ENCODE measurements at regions of chr5 and their contacts with region 1.

Region 1: DNA sequence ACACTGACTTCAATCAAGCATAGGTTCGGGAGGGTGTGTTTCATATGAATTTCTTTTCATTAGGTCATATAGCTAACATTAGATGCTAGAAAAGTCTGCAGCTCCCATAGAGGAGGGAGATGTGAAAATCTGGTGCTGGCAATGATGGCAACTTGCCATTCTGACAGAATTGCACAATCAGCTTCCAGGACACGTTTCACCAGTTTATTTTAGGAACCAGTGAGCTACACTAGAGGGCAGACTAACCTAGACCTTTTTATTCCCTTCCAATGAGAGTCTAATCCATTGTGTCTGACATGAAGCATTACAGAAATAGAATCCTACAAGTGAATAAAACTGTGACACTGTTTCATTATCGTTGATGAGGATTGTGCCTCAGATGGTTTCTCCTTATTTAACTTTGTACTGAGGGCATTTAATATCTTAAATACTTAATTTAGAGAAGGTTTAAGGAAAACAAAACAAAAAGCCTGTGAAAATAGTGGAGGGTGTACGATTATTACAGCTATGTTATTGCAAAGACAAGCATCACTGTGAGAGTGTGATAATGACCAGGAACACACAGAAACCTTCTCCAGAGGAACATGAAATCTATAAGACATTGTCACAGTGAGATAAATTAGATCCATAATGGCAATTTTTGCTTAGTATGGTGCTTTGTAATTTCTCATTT is 363.3 kb upstream of the RPS23 start:
- DNase-seq: peak; percentile 72 to 79
- ATAC-seq: peak; percentile 92
- H3K4me3 ChIP-seq: no peak overlapping the region
- H3K27ac ChIP-seq: peak overlapping the region in 1 of 2 donors; percentile 51
- H3K4me1 ChIP-seq: peaks cover 0 to 10% of the 10 kb centered on the region in 2 donors
- H3K27me3 ChIP-seq: no peaks in the 10 kb centered on the region

Region 2: DNA sequence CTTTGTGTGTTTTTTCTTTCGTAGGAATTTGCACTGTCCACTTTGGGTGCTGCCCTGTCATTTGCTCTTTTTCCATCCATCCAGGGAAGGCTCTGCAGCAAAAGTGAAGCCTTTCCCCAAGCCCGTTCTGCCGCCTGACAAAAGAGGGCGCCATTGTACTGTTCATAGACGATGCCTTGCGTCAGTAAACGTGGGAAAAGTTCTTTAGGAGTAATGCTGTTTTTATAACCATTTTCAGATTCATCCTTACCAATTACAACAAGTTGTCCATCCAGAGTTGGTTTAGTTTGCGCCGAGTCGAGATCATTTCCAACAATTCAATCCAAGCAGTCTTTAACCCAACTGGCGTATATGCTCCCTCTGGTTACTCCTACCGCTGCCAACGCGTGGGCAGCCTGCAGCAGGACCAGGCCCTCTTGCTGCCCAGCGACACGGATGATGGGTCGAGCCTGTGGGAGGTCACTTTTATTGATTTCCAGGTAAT is 329.1 kb before region 1 on chr5:
- intact Hi-C with region 1: loop called in 1 of 2 experiments (anchors 2 kb)
- DNase-seq: peak; percentile 75 to 87
- ATAC-seq: peak; percentile 88
- H3K4me3 ChIP-seq: peak overlapping the region; percentile 5 to 32
- H3K27ac ChIP-seq: peak overlapping the region; percentile 33 to 77
- H3K4me1 ChIP-seq: peaks cover under 1 to 4% of the 10 kb centered on the region in 2 donors
- H3K27me3 ChIP-seq: no peaks in the 10 kb centered on the region

Region 3: GRCh38 chr5:82351754-82352145 is 289.7 kb before region 1 on chr5:
- intact Hi-C with region 1: loop called in 1 of 2 experiments (anchors 5 kb)
- DNase-seq: no peak
- ATAC-seq: peak; percentile 83
- H3K4me3 ChIP-seq: no peak overlapping the region
- H3K27ac ChIP-seq: peak overlapping the region in 1 of 2 donors; percentile 64
- H3K4me1 ChIP-seq: peaks cover 2 to 6% of the 10 kb centered on the region in 2 donors
- H3K27me3 ChIP-seq: no peaks in the 10 kb centered on the region

Region 4: GRCh38 chr5:82428665-82429064 is 212.8 kb before region 1 on chr5:
- intact Hi-C with region 1: no loop called
- DNase-seq: no peak
- ATAC-seq: no peak
- H3K4me3 ChIP-seq: no peak overlapping the region
- H3K27ac ChIP-seq: no peak overlapping the region
- H3K4me1 ChIP-seq: no peaks in the 10 kb centered on the region
- H3K27me3 ChIP-seq: no peaks in the 10 kb centered on the region

Region 5: GRCh38 chr5:82793808-82794419 is 152.4 kb after region 1 on chr5:
- intact Hi-C with region 1: loop called in 1 of 2 experiments (anchors 10 kb)
- DNase-seq: no peak
- ATAC-seq: no peak
- H3K4me3 ChIP-seq: no peak overlapping the region
- H3K27ac ChIP-seq: no peak overlapping the region
- H3K4me1 ChIP-seq: no peaks in the 10 kb centered on the region
- H3K27me3 ChIP-seq: no peaks in the 10 kb centered on the region

Region 6: GRCh38 chr5:83076742-83077661 is 435.5 kb after region 1 on chr5 and contains the starts of genes TMEM167A and XRCC4:
- intact Hi-C with region 1: loop called in 1 of 2 experiments (anchors 5 kb)
- DNase-seq: peak; percentile 97 to 98
- ATAC-seq: peak; percentile 100
- H3K4me3 ChIP-seq: peak within 1 kb of the TSS; percentile 94 to 97
- H3K27ac ChIP-seq: peak within 1 kb of the TSS in 1 of 2 donors; percentile 90
- H3K4me1 ChIP-seq: peaks cover 4 to 5% of the 10 kb centered on the region in 2 donors
- H3K27me3 ChIP-seq: no peaks in the 10 kb centered on the region
- total RNA-seq, gene TMEM167A: 77.4 to 80.9 TPM
- total RNA-seq, gene XRCC4: 9.9 to 10.7 TPM

Region 7: DNA sequence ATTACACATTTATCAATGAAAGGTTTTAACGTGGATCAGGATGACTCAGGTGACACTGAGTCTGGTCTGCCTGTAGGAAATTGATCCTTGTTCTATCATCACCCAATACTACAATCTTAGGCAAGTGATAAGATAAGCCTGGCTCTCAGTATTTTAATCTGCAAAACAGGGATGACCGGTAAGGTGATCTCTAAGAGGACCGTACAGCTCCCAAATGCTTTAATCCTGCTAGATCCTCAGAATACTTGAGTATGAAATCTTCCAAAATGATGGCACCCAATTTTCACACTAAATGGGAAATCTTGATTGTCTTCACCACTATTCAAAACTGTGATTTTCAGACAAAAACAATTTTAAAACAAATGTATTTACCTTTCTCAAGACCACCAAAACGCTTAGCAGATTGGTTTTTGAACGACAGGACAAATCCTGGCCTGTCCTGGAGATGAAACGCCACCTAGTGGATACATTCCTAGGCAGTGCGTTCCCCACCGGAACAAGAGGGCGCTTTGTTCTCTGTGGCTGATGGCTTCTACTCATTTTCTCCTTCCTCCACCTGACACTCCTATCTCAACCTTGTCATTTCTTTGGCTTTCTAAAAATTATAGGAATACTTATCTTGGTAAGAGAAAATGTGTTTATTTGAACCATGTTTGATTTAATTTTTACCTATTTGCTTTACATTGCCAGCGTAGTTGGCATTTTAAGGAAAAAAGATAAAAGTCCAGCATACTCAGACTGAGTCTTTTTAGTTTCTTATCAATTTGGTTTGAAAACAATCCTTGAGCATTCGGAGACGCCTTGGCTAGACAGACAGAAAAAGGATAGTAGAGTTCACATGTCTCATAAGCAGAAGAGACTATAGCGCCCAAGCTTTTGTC is 788.9 kb after region 1 on chr5:
- intact Hi-C with region 1: loop called in 1 of 2 experiments (anchors 10 kb)
- DNase-seq: peak in 1 of 2 donors; percentile 57
- ATAC-seq: peak; percentile 73
- H3K4me3 ChIP-seq: no peak overlapping the region
- H3K27ac ChIP-seq: no peak overlapping the region
- H3K4me1 ChIP-seq: peaks cover 0 to 2% of the 10 kb centered on the region in 2 donors
- H3K27me3 ChIP-seq: no peaks in the 10 kb centered on the region

Region 8: DNA sequence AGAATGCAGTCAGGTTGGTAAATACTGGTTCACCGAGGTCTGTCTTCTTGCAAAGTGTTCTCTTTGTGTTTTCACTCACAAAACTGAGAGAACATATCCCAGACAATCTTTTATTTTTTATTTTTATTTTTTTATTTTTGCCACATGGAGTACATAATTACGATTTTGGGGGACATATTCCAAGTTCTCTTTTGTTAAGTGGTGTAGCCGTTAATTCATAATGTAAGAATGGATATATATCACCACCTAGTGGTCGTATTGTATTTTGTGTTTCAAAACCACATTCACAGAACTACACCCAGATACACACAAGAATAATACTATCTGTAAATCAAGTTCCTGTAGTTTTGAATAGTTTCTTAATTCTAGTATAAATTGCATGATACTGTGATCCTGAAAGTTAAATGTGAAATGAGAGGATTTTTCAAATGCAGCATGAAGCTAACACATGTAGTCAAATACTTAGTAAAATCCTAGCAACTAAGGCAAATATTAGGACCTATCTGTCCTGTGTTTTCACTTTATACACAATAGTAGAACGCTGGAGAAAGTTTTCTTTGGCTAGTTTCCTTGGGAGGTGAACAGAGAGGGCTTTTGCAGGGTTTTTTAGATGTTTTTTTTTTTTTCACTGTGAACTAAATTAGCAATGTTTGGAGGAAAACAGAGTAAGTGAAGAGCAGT is 922.7 kb after region 1 on chr5:
- intact Hi-C with region 1: loop called (anchors 5 to 10 kb)
- DNase-seq: no peak
- ATAC-seq: peak; percentile 76
- H3K4me3 ChIP-seq: no peak overlapping the region
- H3K27ac ChIP-seq: no peak overlapping the region
- H3K4me1 ChIP-seq: peaks cover 4 to 6% of the 10 kb centered on the region in 2 donors
- H3K27me3 ChIP-seq: no peaks in the 10 kb centered on the region

Measured in aorta (tissue), 5 donors.